ENCODE measurements at regions of chr22 and their contacts with region 1.

Region 1: GRCh38 chr22:32796865-32797573 is 4.5 kb upstream of the TIMP3 start:
- DNase-seq: no peak
- H3K4me3 ChIP-seq: no peak overlapping the region
- H3K27ac ChIP-seq: no peak overlapping the region
- H3K4me1 ChIP-seq: peaks cover 5% of the 10 kb centered on the region
- H3K27me3 ChIP-seq: peaks cover 5% of the 10 kb centered on the region
- CTCF ChIP-seq: peak; percentile 94 to 98 (median 97)

Region 2: GRCh38 chr22:32518848-32519247 is 278.2 kb before region 1 on chr22:
- dilution Hi-C with region 1: loop called (anchors 25 kb)
- DNase-seq: peak; percentile 1
- H3K4me3 ChIP-seq: no peak overlapping the region
- H3K27ac ChIP-seq: no peak overlapping the region
- H3K4me1 ChIP-seq: no peaks in the 10 kb centered on the region
- H3K27me3 ChIP-seq: no peaks in the 10 kb centered on the region
- CTCF ChIP-seq: peak; percentile 18 to 48 (median 22)

Region 3: GRCh38 chr22:32708830-32709229 is 88.2 kb before region 1 on chr22:
- dilution Hi-C with region 1: no loop called
- DNase-seq: no peak
- H3K4me3 ChIP-seq: no peak overlapping the region
- H3K27ac ChIP-seq: no peak overlapping the region
- H3K4me1 ChIP-seq: no peaks in the 10 kb centered on the region
- H3K27me3 ChIP-seq: no peaks in the 10 kb centered on the region
- CTCF ChIP-seq: no peak

Region 4: DNA sequence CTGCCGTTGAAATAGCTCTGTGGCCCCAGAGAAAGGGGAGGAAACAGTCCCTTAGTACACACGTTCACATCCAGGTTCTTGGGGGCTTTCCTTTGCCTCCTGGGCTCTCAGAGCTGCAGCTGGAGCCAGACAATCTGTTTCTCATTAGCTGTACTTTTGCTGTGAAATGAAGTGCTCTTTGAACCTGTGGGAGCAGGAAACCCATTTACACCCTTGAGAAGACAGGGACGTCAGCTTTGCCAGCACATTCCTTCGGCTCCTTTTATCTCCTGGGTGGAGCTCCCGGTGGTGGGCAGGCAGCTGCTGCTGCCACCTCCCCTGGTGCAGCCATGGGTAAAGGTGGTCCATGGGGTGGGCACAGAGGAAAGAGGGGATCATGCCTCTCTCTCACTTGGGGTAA is 76.1 kb before region 1 on chr22:
- dilution Hi-C with region 1: no loop called
- DNase-seq: no peak
- H3K4me3 ChIP-seq: no peak overlapping the region
- H3K27ac ChIP-seq: no peak overlapping the region
- H3K4me1 ChIP-seq: peaks cover 37% of the 10 kb centered on the region
- H3K27me3 ChIP-seq: no peaks in the 10 kb centered on the region
- CTCF ChIP-seq: no peak

Measured in keratinocyte (primary cell).